ENCODE measurements at regions of chr11 and their contacts with region 1.

Region 1: DNA sequence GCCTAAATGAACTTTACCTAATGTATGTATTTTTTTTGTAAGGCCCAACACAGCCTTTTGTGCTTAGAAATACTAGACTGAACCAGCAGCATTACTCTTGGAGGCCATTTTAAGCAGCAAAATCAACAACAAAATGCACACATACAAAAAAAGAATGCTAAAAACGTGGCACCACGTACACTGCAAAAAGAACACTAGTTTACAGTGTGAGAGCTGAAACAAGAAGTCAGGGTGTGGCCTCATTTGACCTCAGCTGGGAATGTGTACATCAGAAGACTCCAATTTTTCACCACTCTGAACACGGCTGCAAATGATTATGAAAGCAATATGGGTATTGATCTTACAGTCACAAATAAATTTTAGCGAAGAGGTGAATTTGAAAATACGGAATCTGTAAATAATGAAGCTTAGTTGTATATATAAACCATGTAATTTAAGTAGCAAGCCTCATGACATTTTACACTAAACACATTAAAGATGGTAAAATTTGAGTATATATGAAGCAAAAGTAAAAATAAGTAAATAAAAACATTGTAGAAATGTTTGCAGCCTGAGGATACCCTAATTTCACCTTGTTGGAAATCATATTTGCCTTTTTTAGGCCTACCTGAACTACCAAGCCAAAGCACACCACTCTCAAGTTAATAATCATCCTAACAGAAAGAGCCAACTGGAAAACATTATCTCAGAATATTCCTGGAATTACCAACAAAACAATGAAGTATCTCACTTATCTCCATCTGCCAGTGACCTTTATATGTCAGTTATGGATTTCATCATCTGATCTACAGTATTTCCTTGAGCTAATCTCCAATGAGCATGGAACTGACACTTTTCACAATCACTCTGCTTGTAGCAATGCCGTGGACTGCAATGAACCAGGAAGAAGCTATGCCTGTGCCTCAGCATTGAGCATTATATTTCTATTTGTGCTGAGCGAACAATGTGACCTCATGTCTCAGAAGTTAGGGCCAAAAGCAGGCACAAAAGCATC is 319.5 kb upstream of the FAT3 start:
- DNase-seq: no peak
- H3K4me3 ChIP-seq: no peak overlapping the region
- H3K27ac ChIP-seq: no peak overlapping the region
- H3K4me1 ChIP-seq: no peaks in the 10 kb centered on the region
- H3K27me3 ChIP-seq: no peaks in the 10 kb centered on the region
- CTCF ChIP-seq: no peak
- POLR2A ChIP-seq: no peak

Region 2: DNA sequence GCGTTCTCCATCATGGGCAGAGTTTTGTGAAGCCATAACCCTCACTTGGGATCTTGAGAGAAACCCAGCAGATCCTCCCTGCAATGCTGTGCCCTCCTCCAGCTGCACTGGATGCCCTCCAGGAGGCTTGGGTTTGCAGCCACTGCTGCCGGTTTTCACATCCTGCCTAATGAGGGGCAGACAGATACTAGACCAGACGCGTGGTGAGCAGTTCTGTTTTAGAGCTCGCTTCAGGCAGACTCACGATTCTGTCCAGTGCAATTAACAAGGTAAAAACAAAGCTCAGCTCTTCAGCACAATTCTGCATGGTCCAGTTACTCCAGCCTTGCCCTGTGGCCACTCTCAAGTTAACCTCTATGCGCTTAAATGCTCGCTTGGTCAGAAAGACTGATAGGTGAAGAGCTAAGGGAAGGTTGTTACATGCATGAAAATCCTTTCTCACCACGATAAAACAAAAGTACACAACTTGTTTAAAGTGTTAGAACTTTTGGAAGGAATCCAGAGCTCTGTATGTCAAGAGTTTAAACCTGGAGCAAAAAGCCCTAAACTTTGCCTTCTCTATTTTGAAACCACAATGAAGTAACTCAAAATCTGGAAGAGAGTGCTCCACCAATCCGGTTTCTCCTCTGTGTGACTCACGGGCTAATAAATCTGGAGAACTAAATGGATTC is 27.2 kb after region 1 on chr11:
- CTCF ChIA-PET with region 1: no interaction called
- POLR2A ChIA-PET with region 1: no interaction called
- dilution Hi-C with region 1: no loop called
- intact Hi-C with region 1: loop called (anchors 1 kb)
- DNase-seq: no peak
- H3K4me3 ChIP-seq: no peak overlapping the region
- H3K27ac ChIP-seq: no peak overlapping the region
- H3K4me1 ChIP-seq: no peaks in the 10 kb centered on the region
- H3K27me3 ChIP-seq: no peaks in the 10 kb centered on the region
- CTCF ChIP-seq: no peak
- POLR2A ChIP-seq: no peak

Measured in endothelial cell of umbilical vein (primary cell).